SK-N-SH (cell line): ENCODE measurements at regions of chr13 and their contacts with region 1.

Region 1: GRCh38 chr13:112873851-112874750 is 94.9 kb upstream of the MCF2L start:
- DNase-seq: peak; percentile 93
- H3K4me3 ChIP-seq: no peak overlapping the region; a peak in 1 of 4 replicates
- H3K27ac ChIP-seq: no peak overlapping the region
- H3K4me1 ChIP-seq: peaks cover 0 to 16% of the 10 kb centered on the region in 2 experiments; a peak in 1 of 4 replicates
- H3K27me3 ChIP-seq: no peaks in the 10 kb centered on the region
- CTCF ChIP-seq: peak; percentile 83
- EP300 ChIP-seq: no peak
- RAD21 ChIP-seq: peak; percentile 91

Region 2: DNA sequence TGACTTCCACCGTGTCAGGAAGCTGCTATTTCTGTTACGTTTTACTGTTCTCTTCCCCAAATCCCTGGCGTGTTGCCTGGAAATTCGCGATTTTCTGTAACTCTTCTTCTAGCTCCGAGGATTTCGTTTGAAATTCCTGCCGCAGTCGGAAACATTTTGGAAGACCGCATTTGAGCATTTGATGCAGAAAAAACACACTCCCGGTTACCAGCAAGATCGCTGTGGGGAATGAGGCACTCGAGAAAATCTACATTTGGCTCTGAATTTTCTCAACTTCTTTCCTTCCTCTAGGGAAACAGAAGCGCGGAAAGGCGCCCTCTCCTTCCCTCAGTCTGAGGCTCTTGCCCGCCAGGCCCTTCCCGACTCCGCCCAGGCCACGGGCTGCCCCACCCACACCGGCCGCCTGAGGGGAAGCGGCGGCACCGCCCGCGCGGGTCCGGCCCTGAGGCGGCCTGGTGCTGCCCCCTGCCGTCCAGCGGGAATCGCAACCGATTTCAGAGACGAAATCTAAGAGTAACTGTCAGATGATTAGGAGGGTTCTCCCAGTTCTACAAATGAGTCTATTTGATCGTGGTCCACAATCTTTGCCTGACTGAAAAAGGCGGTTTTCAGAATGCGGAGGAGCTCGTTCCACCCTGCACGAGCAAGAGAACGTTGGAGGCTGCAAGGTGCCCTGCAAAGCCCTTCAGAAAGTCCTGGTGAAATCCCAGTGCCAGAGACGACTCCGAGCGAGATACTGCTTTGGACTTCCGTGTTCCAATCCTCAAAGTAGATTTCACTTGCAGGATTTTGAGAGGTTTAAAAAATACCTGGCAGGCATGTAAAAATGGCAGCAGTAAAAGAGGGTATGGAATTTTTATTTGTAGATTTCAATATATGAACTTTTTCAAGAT is 267.7 kb before region 1 on chr13:
- CTCF ChIA-PET with region 1: interaction called, 16 read pairs
- POLR2A ChIA-PET with region 1: no interaction called
- DNase-seq: peak; percentile 94
- H3K4me3 ChIP-seq: peak overlapping the region; percentile 55 to 61
- H3K27ac ChIP-seq: no peak overlapping the region; a peak in 1 of 4 replicates
- H3K4me1 ChIP-seq: no peaks in the 10 kb centered on the region; a peak in 1 of 4 replicates
- H3K27me3 ChIP-seq: no peaks in the 10 kb centered on the region; the same call in 1 of the 2 replicates
- CTCF ChIP-seq: peak; percentile 95
- EP300 ChIP-seq: no peak
- RAD21 ChIP-seq: peak; percentile 93

Region 3: DNA sequence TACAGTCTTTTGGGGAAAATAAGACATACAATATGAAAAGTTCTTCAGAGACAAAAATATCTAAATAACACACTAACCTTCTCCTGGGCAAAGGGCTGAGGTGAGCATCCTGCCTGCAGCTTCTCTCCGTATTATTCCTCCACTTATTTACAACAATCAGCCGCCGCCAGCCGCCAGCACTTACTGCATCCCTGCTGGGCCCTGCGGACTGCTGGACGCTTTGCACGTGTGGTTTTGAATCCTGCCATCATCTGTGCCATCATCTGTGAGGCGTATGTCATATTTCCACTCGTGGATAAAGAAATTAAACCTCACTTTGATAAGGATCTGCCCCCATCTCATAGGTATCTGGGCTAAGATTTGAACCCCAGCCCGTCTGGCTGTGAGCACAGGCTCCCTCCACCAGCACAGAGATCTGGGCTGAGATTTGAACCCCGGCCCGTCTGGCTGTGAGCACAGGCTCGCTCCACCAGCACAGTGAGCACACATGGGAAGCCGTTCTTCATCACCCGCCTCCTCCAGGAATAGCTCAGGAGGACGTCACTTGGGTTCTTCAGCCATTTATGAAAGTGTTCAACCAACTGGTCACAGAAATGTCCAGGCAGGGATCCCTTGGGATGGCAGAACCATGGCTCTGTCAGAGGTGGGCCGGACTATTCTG is 250.9 kb before region 1 on chr13:
- CTCF ChIA-PET with region 1: interaction called, 15 read pairs
- POLR2A ChIA-PET with region 1: no interaction called
- DNase-seq: no peak
- H3K4me3 ChIP-seq: no peak overlapping the region
- H3K27ac ChIP-seq: no peak overlapping the region
- H3K4me1 ChIP-seq: no peaks in the 10 kb centered on the region
- H3K27me3 ChIP-seq: peaks cover 5% of the 10 kb centered on the region; the same call in 1 of the 2 replicates
- CTCF ChIP-seq: no peak
- EP300 ChIP-seq: no peak
- RAD21 ChIP-seq: no peak

Region 4: GRCh38 chr13:112859817-112860190 is 14.3 kb before region 1 on chr13:
- CTCF ChIA-PET with region 1: interaction called, 16 read pairs
- POLR2A ChIA-PET with region 1: no interaction called
- DNase-seq: peak; percentile 84
- H3K4me3 ChIP-seq: no peak overlapping the region
- H3K27ac ChIP-seq: peak overlapping the region in 1 of 2 experiments; percentile 43; a peak in 1 of 4 replicates
- H3K4me1 ChIP-seq: peaks cover 0 to 15% of the 10 kb centered on the region in 2 experiments; a peak in 2 of 4 replicates
- H3K27me3 ChIP-seq: no peaks in the 10 kb centered on the region
- CTCF ChIP-seq: no peak
- EP300 ChIP-seq: no peak
- RAD21 ChIP-seq: no peak

Region 5: DNA sequence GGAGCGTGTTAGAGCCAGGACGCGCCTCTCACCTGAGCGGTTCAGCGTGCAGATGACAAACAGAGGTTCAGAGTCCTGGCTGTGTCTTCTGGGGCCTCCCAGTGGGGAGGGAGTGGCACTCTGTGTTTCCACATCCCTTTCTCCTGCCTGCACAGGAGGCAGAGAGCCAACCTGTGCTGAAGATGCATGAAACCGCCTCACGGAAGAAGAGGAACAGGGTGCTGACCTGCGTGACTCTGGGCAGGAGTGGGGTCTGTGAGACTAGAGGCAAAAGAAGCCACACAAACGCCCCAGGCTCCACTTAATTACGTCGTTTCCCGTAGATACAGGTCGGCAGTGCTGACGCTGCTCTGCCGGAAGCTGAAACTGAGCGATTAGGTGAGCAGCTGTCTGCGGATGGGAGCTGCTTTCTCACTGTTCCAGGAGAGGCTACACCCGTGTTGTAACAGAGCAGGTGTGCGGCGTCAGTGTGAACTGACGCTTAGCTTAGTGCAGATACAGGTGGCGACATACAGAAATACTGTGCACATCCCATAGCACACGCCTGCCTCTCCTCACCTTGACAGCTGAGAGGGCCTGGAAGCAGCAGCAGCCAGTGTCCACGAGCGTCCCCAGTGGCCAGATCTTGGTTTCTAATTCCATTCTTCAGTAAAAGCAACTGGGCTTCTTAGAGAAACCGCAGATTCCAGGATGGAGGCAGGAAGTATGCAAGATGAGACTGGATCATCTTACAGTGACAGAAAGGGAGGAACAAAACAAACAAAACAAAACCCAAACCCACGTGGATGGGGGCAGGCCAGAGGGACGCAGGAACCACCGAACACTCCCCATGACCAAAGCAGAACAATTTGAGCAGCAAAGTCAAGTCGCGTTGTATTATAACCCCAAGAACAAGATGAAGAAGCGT is 57.2 kb after region 1 on chr13:
- CTCF ChIA-PET with region 1: interaction called, 13 read pairs
- POLR2A ChIA-PET with region 1: no interaction called
- DNase-seq: peak; percentile 71
- H3K4me3 ChIP-seq: no peak overlapping the region
- H3K27ac ChIP-seq: peak overlapping the region in 1 of 2 experiments; percentile 43; a peak in 1 of 4 replicates
- H3K4me1 ChIP-seq: peaks cover 0 to 50% of the 10 kb centered on the region in 2 experiments; a peak in 2 of 4 replicates
- H3K27me3 ChIP-seq: peaks cover 13% of the 10 kb centered on the region; the same call in 1 of the 2 replicates
- CTCF ChIP-seq: peak; percentile 69
- EP300 ChIP-seq: no peak
- RAD21 ChIP-seq: peak; percentile 58